HCT116 (cell line): ENCODE measurements at regions of chr12 and their contacts with region 1.

Region 1: DNA sequence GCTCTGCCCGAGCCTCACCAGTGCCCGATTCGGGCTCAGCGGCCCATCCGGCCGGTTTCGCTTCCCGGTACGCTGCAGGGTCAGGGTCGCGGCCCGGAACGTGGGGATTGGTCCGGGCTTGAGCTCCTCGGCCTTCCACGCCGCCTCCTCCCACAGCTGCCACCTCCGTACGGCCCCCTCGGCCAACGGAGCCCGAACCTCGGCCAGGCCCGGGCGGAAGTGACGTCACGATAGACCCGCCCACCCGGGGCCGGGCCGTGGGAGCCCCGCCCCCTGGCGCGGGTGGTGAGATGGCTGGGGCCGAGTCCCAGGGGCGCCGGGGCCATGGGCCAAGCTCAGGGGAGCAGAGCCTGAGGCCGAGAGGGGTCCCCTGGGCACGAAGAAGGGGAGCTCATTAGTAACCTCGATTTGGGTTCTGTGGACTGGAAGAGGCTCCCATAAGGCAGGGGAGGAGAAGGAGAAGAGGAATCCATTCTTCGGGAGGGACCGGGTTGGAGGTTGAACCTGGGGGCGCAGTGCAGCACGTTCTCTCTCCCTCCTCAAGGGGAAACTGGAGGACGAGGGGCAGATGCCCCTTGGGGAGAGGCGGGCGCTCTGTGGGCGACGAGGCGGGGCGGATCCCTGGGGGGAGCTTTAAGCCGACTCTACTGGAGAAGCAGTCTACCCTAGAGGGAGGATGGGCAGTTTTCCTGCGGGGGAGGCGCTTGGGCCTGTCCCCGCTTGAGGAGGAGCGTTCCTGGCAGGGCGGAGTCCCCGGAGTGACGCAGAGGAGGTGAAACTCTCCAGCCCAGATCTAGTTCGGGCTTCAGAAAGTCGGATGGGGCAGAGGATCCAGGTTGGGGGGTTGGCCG is at the start of gene MLF2:
- DNase-seq: peak; percentile 97
- ATAC-seq: peak; percentile 92
- H3K4me3 ChIP-seq: peak within 1 kb of the TSS; percentile 94 to 99
- H3K27ac ChIP-seq: peak within 1 kb of the TSS; percentile 92
- H3K4me1 ChIP-seq: peaks cover 14 to 32% of the 10 kb centered on the region in 2 experiments; a peak in 3 of 4 replicates
- H3K27me3 ChIP-seq: no peaks in the 10 kb centered on the region
- CTCF ChIP-seq: no peak; a peak in 4 of 6 replicates
- POLR2A ChIP-seq: peak; percentile 83
- RAD21 ChIP-seq: no peak; the same call in 1 of the 2 replicates
- total RNA-seq, gene MLF2: 309 TPM

Region 2: GRCh38 chr12:6407236-6407954 is 345.8 kb before region 1 on chr12:
- CTCF ChIA-PET with region 1: no interaction called
- POLR2A ChIA-PET with region 1: no interaction called
- RAD21 ChIA-PET with region 1: no interaction called
- intact Hi-C with region 1: no loop called
- DNase-seq: no peak
- ATAC-seq: no peak
- H3K4me3 ChIP-seq: no peak overlapping the region
- H3K27ac ChIP-seq: no peak overlapping the region
- H3K4me1 ChIP-seq: no peaks in the 10 kb centered on the region
- H3K27me3 ChIP-seq: no peaks in the 10 kb centered on the region
- CTCF ChIP-seq: no peak
- POLR2A ChIP-seq: no peak
- RAD21 ChIP-seq: no peak

Region 3: GRCh38 chr12:6716874-6717437 is 36.2 kb before region 1 on chr12:
- CTCF ChIA-PET with region 1: no interaction called
- POLR2A ChIA-PET with region 1: no interaction called
- RAD21 ChIA-PET with region 1: no interaction called
- intact Hi-C with region 1: no loop called
- DNase-seq: no peak
- ATAC-seq: no peak
- H3K4me3 ChIP-seq: no peak overlapping the region
- H3K27ac ChIP-seq: no peak overlapping the region
- H3K4me1 ChIP-seq: no peaks in the 10 kb centered on the region
- H3K27me3 ChIP-seq: no peaks in the 10 kb centered on the region
- CTCF ChIP-seq: no peak
- POLR2A ChIP-seq: peak; percentile 64
- RAD21 ChIP-seq: no peak

Region 4: DNA sequence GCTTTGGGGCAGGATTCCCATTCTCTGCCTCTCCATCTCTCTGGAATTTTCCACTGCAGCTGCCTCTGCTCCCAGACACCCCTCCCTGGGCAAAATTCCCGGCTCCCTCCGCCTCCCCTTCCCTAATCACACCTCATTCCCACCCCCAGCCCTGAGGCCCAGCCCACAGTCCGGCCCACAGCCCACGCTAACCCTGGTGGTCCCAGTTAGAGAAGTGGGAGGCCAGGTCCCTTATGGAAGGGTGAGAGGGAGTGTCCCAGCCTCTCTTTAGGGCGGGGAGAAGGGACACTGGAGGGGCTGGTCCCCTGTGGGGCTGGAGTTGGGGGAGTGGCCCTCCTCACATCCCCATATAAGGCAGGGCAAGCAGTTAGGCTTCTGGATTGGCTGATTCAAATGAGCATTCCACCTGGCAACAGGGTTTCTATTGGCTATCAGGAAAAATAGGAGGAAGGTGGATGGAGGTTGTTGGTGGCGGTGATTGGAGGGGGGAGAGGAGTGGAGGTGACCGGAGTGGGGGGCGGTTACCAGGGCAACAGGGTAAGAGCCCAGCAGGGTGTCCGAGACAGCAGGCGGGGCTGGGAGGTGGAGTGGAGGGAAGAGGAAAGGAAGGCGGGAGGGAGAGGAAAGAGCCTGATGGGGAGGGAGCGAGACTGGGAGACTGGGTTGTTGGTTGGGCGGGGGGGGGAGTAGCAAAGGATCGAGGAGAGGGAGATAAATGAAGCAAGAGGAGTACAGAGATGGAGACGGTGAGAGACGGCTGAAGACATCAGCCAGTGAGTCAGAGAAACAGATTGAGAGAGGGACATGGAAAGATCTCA is 11.1 kb after region 1 on chr12:
- CTCF ChIA-PET with region 1: interaction called, 53 read pairs
- POLR2A ChIA-PET with region 1: interaction called, 41 read pairs
- RAD21 ChIA-PET with region 1: interaction called, 4 to 15 read pairs
- intact Hi-C with region 1: loop called (anchors 2 kb)
- DNase-seq: peak; percentile 99
- ATAC-seq: peak; percentile 80
- H3K4me3 ChIP-seq: peak overlapping the region; percentile 85 to 90
- H3K27ac ChIP-seq: peak overlapping the region; percentile 72
- H3K4me1 ChIP-seq: peaks cover 54 to 74% of the 10 kb centered on the region in 2 experiments
- H3K27me3 ChIP-seq: no peaks in the 10 kb centered on the region
- CTCF ChIP-seq: no peak
- POLR2A ChIP-seq: peak; percentile 53
- RAD21 ChIP-seq: no peak

Region 5: DNA sequence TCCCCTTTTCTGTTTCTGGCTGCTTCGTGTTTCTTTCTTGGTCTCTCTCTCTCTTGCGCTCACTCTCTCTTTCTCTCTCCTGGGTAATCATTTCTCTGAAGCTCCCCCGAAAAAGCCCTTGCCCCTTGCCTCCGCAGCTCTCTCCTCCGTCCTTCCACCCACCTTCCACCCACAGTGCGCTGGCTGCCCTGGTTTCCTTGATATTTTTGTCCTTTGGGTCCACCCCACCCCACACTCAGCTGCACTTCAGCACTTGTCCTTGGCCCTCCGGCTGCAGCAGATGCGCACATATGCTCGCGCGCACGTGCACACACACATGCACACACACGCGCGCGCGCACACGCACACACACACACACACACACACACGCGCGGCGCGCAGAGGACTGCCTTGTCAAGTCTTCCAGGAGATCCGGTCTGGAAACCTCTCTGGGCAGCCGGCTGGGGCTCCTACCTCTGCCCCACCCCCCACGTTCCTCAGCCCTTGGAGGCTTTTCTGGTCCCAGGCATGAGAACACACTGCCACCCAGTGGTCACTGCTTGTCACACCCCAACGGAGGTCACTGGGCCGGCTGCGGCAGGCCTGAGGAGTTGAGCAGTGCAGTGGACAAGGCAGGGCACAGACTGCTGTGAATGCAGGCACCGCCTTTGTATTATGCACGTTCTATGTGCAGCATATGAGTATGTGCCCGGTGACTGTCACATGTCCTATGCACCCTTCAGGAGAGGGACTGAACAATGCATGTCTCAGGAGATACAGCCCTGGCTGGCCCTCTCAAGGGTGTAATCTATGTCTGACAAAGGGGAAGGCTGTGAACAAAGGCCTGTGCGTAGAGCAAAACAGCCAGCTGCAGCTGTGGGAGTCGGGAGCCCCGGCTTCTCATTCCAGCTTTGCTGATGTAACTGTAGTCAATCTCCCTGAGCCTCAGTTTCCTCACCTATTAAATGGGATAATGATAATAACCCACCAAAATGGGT is 25.7 kb after region 1 on chr12:
- CTCF ChIA-PET with region 1: interaction called, 16 read pairs
- POLR2A ChIA-PET with region 1: interaction called, 7 read pairs
- RAD21 ChIA-PET with region 1: interaction called in 1 of 2 experiments, 4 read pairs
- intact Hi-C with region 1: loop called (anchors 1 kb)
- DNase-seq: peak; percentile 81
- ATAC-seq: peak; percentile 98
- H3K4me3 ChIP-seq: peak overlapping the region in 1 of 2 experiments; percentile 32; a peak in 1 of 4 replicates
- H3K27ac ChIP-seq: peak overlapping the region; percentile 51
- H3K4me1 ChIP-seq: peaks cover 11 to 14% of the 10 kb centered on the region in 2 experiments; a peak in 3 of 4 replicates
- H3K27me3 ChIP-seq: no peaks in the 10 kb centered on the region
- CTCF ChIP-seq: peak; percentile 95
- POLR2A ChIP-seq: no peak
- RAD21 ChIP-seq: peak; percentile 99

Region 6: DNA sequence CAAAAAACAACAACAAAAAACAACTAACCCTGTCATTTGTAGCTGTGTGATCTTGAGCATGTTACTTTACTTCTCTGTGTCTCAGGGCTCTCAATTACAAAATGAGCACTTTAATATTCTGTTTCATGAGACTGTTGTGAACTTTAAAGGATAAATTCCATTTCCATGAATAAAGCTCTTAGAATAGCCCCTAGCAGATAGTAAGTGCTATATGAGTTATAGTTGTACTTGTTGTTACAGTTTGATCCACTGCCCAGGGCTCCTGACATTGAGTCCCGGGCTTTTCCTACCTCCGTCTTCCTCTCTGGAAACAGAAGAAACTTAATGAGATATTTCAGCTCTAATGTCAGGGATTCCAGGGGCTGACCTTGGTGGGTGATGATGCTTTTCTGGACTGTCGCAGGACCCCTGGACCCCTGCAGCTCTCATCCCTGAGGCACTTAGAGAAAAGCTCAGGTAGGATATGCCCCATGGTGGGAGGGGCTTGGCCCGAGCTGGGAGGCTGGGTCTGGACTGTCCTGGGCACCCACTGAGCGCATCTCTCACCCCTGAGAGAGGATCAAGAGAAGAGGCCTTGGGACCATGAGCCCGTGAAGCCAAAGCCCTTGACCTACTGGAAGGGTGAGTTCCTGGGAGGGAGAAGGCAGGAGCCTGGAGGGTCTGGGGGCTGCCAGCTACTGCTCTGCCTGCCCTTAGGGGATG is 80.2 kb after region 1 on chr12:
- CTCF ChIA-PET with region 1: interaction called, 22 read pairs
- POLR2A ChIA-PET with region 1: interaction called, 5 read pairs
- RAD21 ChIA-PET with region 1: no interaction called
- intact Hi-C with region 1: no loop called
- DNase-seq: no peak
- ATAC-seq: no peak
- H3K4me3 ChIP-seq: no peak overlapping the region
- H3K27ac ChIP-seq: no peak overlapping the region
- H3K4me1 ChIP-seq: peaks cover 5 to 22% of the 10 kb centered on the region in 2 experiments
- H3K27me3 ChIP-seq: no peaks in the 10 kb centered on the region
- CTCF ChIP-seq: no peak
- POLR2A ChIP-seq: no peak
- RAD21 ChIP-seq: no peak

Region 7: DNA sequence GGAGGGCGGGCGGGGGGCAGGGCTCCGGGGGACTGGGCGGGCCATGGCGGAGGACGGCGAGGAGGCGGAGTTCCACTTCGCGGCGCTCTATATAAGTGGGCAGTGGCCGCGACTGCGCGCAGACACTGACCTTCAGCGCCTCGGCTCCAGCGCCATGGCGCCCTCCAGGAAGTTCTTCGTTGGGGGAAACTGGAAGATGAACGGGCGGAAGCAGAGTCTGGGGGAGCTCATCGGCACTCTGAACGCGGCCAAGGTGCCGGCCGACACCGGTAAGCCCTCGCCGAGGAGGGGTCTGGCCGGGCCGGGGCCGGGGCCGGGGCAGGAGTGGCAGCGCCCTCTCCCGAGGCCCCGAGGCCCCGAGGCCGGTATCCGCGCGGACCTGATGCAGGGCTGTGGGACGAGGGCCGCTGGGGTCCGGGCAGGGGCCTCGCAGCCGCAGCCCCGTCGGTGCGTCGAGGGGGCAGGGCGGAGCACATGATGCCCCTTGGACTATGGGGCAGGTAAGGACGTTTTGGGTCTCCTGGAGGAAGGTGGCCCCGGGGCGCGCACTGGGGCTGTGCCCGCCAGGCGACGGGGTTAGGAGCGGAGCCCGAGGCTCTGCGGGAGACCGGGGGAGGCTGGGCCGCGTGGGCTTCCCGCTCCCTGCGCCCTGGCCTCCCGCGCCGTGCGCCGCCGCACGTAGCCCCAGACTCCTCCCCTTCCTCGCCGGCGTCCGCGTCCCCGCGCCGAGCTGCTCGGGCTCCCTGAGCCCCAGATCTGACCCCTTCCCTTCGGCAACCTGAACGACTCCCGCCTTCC is 114.5 kb after region 1 on chr12 and contains the start of gene TPI1:
- CTCF ChIA-PET with region 1: interaction called, 17 read pairs
- POLR2A ChIA-PET with region 1: interaction called, 22 read pairs
- RAD21 ChIA-PET with region 1: no interaction called
- intact Hi-C with region 1: no loop called
- DNase-seq: no peak
- ATAC-seq: peak; percentile 73
- H3K4me3 ChIP-seq: peak within 1 kb of the TSS; percentile 97 to 99
- H3K27ac ChIP-seq: peak within 1 kb of the TSS; percentile 96
- H3K4me1 ChIP-seq: peaks cover 33 to 61% of the 10 kb centered on the region in 2 experiments
- H3K27me3 ChIP-seq: no peaks in the 10 kb centered on the region
- CTCF ChIP-seq: no peak
- POLR2A ChIP-seq: peak; percentile 99
- RAD21 ChIP-seq: no peak
- total RNA-seq, gene TPI1: 1,068 TPM

Region 8: GRCh38 chr12:6965026-6965661 is 212.0 kb after region 1 on chr12:
- CTCF ChIA-PET with region 1: no interaction called
- POLR2A ChIA-PET with region 1: no interaction called
- RAD21 ChIA-PET with region 1: no interaction called
- intact Hi-C with region 1: loop called (anchors 5 kb)
- DNase-seq: peak; percentile 79
- ATAC-seq: peak; percentile 31
- H3K4me3 ChIP-seq: peak overlapping the region; percentile 96 to 99
- H3K27ac ChIP-seq: peak overlapping the region; percentile 97
- H3K4me1 ChIP-seq: peaks cover 39 to 79% of the 10 kb centered on the region in 2 experiments
- H3K27me3 ChIP-seq: no peaks in the 10 kb centered on the region
- CTCF ChIP-seq: peak in 2 of 3 experiments; percentile 92 to 96; a peak in 4 of 6 replicates
- POLR2A ChIP-seq: peak; percentile 56
- RAD21 ChIP-seq: no peak